Heart right ventricle (tissue), 16 donors: ENCODE measurements at regions of chr14 and their contacts with region 1.

Region 1: DNA sequence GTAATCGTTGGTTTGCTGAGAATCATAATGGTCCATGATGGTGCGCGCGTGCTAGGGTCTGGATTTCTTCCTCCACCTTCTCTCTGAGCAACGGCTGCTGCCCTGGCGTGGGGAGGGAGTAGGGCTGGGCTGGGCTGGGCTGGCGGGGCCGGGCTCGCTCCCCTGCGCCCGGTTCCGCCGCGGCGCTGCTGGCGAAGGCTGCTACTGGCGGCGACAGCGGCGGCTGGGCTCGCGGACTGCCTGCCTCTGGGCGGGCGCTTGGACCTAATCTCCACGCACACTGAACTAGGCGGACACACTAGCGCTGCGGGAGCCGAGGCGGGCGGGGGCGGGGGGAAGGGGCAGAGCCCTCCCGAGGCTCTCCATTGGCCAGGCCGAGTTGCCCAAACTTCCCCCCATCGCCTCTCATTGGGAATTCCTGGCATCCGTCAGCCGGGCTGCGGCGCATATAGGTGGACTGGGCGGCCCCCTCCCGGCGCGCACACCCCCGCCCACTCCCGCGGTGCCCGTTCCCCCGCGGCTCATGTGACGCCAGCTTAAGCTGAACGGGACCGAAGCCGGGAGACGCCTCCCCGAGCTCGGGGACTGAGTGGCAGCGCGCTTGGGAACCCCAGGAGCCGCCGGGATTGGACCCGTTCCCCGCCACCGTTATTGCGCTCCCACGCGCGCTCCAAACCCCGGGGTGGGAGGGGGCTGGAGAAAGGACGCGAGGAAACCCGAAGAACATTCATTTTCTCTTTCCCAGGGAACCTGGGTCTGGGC is at the start of gene ACTN1:
- DNase-seq: peak; percentile 89 to 94
- ATAC-seq: peak; percentile 79 to 89 (median 85)
- H3K4me3 ChIP-seq: peak within 1 kb of the TSS; percentile 78 to 100 (median 96)
- H3K27ac ChIP-seq: peak within 1 kb of the TSS; percentile 81 to 99 (median 96)
- H3K4me1 ChIP-seq: peaks cover 14 to 53% (median 40%) of the 10 kb centered on the region in 9 donors
- H3K27me3 ChIP-seq: no peaks in the 10 kb centered on the region
- CTCF ChIP-seq: peak in 1 of 9 donors; percentile 14
- total RNA-seq, gene ACTN1: 82.5 to 235 (median 112) TPM

Region 2: GRCh38 chr14:68911594-68912227 is 67.5 kb before region 1 on chr14:
- intact Hi-C with region 1: loop called in 8 of 10 experiments (anchors 1 to 5 kb)
- DNase-seq: peak; percentile 73 to 84
- ATAC-seq: peak; percentile 85 to 92 (median 88)
- H3K4me3 ChIP-seq: no peak overlapping the region
- H3K27ac ChIP-seq: peak overlapping the region in 4 of 10 donors; percentile 5 to 36 (median 10)
- H3K4me1 ChIP-seq: peaks cover 0 to 41% (median 9%) of the 10 kb centered on the region in 9 donors
- H3K27me3 ChIP-seq: no peaks in the 10 kb centered on the region
- CTCF ChIP-seq: peak; percentile 95 to 100 (median 99)

Region 3: GRCh38 chr14:68924186-68925158 is 54.7 kb before region 1 on chr14:
- intact Hi-C with region 1: loop called in 2 of 10 experiments (anchors 5 kb)
- DNase-seq: peak; percentile 48 to 57
- ATAC-seq: peak in 7 of 8 donors; percentile 50 to 71 (median 67)
- H3K4me3 ChIP-seq: no peak overlapping the region
- H3K27ac ChIP-seq: peak overlapping the region; percentile 3 to 90 (median 74)
- H3K4me1 ChIP-seq: peaks cover 23 to 72% (median 58%) of the 10 kb centered on the region in 9 donors
- H3K27me3 ChIP-seq: no peaks in the 10 kb centered on the region
- CTCF ChIP-seq: no peak

Region 4: DNA sequence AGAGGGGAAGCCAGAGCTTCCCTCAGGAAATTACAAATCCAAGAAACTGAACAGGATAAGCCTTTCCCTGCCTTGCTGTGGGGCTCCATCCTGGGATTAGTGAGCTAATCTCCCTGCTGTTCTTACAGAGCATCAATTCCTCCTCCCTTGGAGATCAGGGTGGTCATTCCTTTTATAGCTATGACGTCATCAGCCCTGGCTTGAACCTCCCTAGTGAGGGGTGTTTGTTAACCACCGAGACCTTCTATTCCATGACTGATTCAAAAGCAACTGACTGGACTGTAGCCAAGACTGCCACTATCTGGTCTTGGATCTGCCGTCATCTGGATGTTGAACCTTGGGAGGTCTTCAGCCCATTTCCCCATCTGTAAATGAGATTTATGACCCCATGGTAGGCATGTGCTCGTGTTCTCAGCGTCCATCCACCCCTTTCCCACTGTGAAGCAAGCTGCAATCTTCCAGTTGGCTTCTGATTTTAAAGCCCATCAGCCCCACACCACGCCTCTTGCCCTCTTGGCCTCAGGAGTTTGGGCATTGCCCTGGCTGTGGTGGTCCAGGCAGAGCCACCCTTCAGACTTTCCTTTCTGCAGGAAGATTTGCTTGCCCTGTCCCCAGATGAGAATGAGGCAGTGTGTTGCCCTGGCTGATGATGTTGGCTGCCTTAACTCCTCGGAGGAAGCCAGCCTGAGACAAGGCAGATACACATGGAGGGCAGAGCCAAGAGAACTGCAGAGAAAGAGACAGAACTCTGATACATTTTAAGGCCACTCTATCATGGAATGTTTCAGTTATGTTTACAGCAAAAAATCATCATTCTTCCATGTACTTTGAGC is 59.5 kb after region 1 on chr14:
- intact Hi-C with region 1: loop called in 1 of 10 experiments (anchors 10 kb)
- DNase-seq: peak in 1 of 2 donors; percentile 42
- ATAC-seq: peak; percentile 16 to 78 (median 39)
- H3K4me3 ChIP-seq: no peak overlapping the region
- H3K27ac ChIP-seq: peak overlapping the region in 8 of 10 donors; percentile 18 to 80 (median 44)
- H3K4me1 ChIP-seq: peaks cover 9 to 74% (median 36%) of the 10 kb centered on the region in 9 donors
- H3K27me3 ChIP-seq: no peaks in the 10 kb centered on the region
- CTCF ChIP-seq: no peak

Region 5: DNA sequence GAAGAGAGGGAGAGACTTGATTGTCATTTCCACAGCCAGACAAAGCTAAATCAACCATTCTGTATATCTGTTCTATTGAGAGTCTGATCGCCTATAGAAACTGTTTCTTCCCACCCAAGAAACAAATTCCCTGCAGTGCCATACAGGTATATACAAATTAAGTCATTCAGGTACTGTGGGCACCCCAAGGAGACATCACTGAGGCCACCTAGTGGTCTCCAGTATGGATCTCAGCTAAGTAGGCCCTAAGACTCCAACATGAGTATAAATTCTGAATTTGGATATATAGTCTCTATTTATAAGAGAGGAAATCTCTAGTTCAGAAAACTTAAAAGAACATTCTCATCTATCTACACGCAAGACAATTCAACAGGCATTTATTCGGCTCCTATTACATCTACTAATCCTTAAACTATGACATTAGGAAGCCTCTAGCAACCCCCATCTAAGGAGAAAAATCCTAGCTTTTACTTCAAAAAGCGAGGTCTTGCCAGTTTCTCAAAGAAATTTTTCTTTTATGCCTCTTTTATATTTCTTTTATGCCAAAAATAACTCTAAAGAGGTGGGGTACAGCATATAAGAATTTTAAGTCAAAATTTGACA is 111.1 kb after region 1 on chr14:
- intact Hi-C with region 1: loop called in 3 of 10 experiments (anchors 5 to 10 kb)
- DNase-seq: peak in 1 of 2 donors; percentile 18
- ATAC-seq: peak in 4 of 8 donors; percentile 53 to 63 (median 58)
- H3K4me3 ChIP-seq: no peak overlapping the region
- H3K27ac ChIP-seq: no peak overlapping the region
- H3K4me1 ChIP-seq: peaks cover 0 to 26% (median 23%) of the 10 kb centered on the region in 9 donors
- H3K27me3 ChIP-seq: no peaks in the 10 kb centered on the region
- CTCF ChIP-seq: peak; percentile 30 to 79 (median 72)